ENCODE measurements at regions of chr12 and their contacts with region 1.

Region 1: GRCh38 chr12:110647631-110648040 is 33.7 kb downstream of the TCTN1 start:
- DNase-seq: peak in 7 of 9 donors; percentile 33 to 61 (median 42)
- ATAC-seq: peak; percentile 69
- H3K4me3 ChIP-seq: no peak overlapping the region
- H3K4me3 Mint-ChIP-seq: peak overlapping the region in 8 of 10 donors; percentile 13 to 68 (median 57)
- H3K27ac ChIP-seq: peak overlapping the region; percentile 52
- H3K27ac Mint-ChIP-seq: peak overlapping the region; percentile 40 to 95 (median 88)
- H3K4me1 ChIP-seq: peaks cover 0 to 16% of the 10 kb centered on the region in 2 donors
- H3K4me1 Mint-ChIP-seq: peaks cover 16 to 68% (median 48%) of the 10 kb centered on the region in 7 donors
- H3K27me3 ChIP-seq: no peaks in the 10 kb centered on the region
- H3K27me3 Mint-ChIP-seq: no peaks in the 10 kb centered on the region

Region 2: DNA sequence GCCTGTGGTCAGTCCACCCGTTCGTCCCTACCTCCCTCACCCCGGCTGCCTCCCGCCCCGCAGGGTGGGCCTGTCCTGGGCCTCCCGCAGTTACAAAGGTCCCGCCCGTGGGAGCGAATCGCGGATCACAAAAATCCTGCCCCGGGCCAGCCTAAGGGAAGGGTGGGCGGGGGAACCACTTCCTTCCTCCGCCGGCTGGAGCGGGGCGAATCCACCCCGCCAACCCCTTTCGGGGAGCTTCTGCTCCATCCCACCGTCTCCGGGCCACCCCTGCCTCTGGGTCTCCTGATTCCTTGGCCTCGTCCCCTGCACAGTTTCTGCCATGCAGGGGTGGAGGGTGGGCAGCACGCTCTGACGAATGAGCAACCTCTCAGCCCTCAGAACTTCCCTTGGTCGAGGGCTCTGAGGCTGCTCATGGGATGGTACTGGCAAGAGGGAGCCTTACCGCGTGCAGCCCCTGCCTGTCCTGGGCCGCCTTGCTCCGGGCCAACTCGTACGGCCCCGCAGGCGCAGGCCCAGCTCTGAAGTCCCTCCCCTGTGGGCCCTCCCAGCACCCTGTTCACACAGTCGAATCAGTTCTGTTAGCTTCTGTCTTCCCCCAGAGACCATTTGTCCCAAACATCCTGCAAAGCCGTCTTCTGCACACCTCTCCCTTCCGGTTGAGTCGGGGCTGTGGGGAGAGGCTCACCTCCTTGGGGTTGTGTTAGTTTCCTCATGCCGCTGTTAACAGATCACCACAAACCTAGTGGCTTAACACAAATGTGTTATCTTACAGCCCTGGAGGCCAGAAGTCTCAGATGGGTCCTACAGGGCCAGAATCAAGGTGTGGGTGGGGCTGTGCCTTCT is 41.9 kb after region 1 on chr12:
- CTCF ChIA-PET with region 1: no interaction called
- POLR2A ChIA-PET with region 1: interaction called, 4 read pairs
- intact Hi-C with region 1: loop called in 1 of 2 experiments (anchors 5 kb)
- DNase-seq: peak; percentile 20 to 62 (median 44)
- ATAC-seq: peak; percentile 69
- H3K4me3 ChIP-seq: peak overlapping the region; percentile 77
- H3K4me3 Mint-ChIP-seq: peak overlapping the region; percentile 84 to 98 (median 92)
- H3K27ac ChIP-seq: peak overlapping the region; percentile 66
- H3K27ac Mint-ChIP-seq: peak overlapping the region; percentile 65 to 96 (median 91)
- H3K4me1 ChIP-seq: peaks cover 13 to 14% of the 10 kb centered on the region in 2 donors
- H3K4me1 Mint-ChIP-seq: peaks cover 27 to 71% (median 55%) of the 10 kb centered on the region in 7 donors
- H3K27me3 ChIP-seq: no peaks in the 10 kb centered on the region
- H3K27me3 Mint-ChIP-seq: peaks cover 0 to 9% (median 0%) of the 10 kb centered on the region in 5 donors

Region 3: DNA sequence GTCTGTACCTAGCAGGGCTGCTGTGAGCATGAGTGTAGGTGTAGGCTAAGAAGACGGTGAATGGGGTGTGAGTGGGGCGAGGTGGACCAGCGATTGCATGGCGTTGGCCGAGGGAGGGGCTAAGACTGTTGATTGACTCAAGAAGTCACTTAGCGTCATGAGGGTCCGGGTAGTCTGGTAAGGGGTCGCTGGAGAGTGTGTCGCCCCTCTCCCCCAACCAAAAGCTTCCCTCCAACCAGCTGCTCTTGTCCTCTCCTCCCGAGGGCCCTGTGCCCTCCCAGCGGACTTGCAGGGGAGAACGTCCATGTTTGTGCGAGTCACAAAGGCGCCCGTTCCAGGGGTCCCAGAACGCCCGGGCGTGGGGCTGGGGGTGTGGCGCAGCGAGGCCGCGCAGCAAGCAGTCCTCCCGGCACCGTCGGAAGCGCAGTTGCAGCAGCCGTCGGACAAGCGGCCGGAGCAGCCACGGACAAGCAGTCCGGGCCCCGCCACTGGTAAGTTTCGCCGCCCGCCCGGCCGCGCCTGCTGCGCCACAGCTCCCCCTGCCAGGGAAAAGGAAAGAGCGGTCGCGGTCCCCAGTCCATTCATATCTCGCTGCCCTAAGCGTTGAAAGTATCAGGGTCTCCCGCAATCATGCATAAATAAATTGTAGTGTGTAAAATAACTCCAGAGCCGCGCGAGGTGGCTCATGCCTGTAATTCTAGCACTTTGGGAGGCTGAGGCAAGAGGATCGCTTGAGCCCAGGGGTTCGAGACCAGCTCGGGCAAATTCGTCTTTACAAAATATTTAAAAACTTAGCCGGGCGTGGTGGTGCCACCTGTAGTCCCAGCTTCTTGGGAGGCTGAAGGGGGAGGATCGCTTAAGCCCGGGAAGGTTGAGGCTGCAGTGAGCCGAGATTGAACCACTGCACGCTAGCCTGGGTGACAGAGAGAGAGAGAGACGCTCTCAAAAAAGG is 199.3 kb after region 1 on chr12 and contains the start of gene CCDC63:
- CTCF ChIA-PET with region 1: no interaction called
- POLR2A ChIA-PET with region 1: no interaction called
- intact Hi-C with region 1: no loop called
- DNase-seq: peak in 7 of 9 donors; percentile 9 to 44 (median 19)
- ATAC-seq: peak; percentile 68
- H3K4me3 ChIP-seq: peak within 1 kb of the TSS; percentile 35
- H3K4me3 Mint-ChIP-seq: peak within 1 kb of the TSS; percentile 80 to 90 (median 84)
- H3K27ac ChIP-seq: no peak within 1 kb of the TSS
- H3K27ac Mint-ChIP-seq: peak within 1 kb of the TSS in 3 of 9 donors; percentile 53 to 84 (median 61)
- H3K4me1 ChIP-seq: no peaks in the 10 kb centered on the region
- H3K4me1 Mint-ChIP-seq: peaks cover 0 to 10% (median 4%) of the 10 kb centered on the region in 7 donors
- H3K27me3 ChIP-seq: peaks cover 0 to 3% of the 10 kb centered on the region in 2 donors
- H3K27me3 Mint-ChIP-seq: peaks cover 16 to 67% (median 28%) of the 10 kb centered on the region in 5 donors
- total RNA-seq, gene CCDC63: not detected

Region 4: GRCh38 chr12:111570084-111570961 is 922.7 kb after region 1 on chr12:
- CTCF ChIA-PET with region 1: no interaction called
- POLR2A ChIA-PET with region 1: no interaction called
- intact Hi-C with region 1: no loop called
- DNase-seq: no peak
- ATAC-seq: no peak
- H3K4me3 ChIP-seq: no peak overlapping the region
- H3K4me3 Mint-ChIP-seq: no peak overlapping the region
- H3K27ac ChIP-seq: no peak overlapping the region
- H3K27ac Mint-ChIP-seq: peak overlapping the region in 2 of 9 donors; percentile 3 to 12
- H3K4me1 ChIP-seq: no peaks in the 10 kb centered on the region
- H3K4me1 Mint-ChIP-seq: peaks cover 14 to 43% (median 20%) of the 10 kb centered on the region in 7 donors
- H3K27me3 ChIP-seq: no peaks in the 10 kb centered on the region
- H3K27me3 Mint-ChIP-seq: no peaks in the 10 kb centered on the region

Measured in naive thymus-derived CD4-positive, alpha-beta T cell (primary cell).